BJ (cell line): ENCODE measurements at regions of chr2 and their contacts with region 1.

Region 1: GRCh38 chr2:42954227-42954962 is 162.0 kb upstream of the HAAO start:
- DNase-seq: no peak
- H3K4me3 ChIP-seq: no peak overlapping the region
- H3K27me3 ChIP-seq: no peaks in the 10 kb centered on the region
- CTCF ChIP-seq: 0 out of 2 replicates have a peak, but pooled peaks have one; percentile 10

Region 2: GRCh38 chr2:42624047-42624446 is 330.3 kb before region 1 on chr2:
- CTCF ChIA-PET with region 1: no interaction called
- POLR2A ChIA-PET with region 1: no interaction called
- DNase-seq: no peak
- H3K4me3 ChIP-seq: no peak overlapping the region
- H3K27me3 ChIP-seq: no peaks in the 10 kb centered on the region
- CTCF ChIP-seq: no peak

Region 3: DNA sequence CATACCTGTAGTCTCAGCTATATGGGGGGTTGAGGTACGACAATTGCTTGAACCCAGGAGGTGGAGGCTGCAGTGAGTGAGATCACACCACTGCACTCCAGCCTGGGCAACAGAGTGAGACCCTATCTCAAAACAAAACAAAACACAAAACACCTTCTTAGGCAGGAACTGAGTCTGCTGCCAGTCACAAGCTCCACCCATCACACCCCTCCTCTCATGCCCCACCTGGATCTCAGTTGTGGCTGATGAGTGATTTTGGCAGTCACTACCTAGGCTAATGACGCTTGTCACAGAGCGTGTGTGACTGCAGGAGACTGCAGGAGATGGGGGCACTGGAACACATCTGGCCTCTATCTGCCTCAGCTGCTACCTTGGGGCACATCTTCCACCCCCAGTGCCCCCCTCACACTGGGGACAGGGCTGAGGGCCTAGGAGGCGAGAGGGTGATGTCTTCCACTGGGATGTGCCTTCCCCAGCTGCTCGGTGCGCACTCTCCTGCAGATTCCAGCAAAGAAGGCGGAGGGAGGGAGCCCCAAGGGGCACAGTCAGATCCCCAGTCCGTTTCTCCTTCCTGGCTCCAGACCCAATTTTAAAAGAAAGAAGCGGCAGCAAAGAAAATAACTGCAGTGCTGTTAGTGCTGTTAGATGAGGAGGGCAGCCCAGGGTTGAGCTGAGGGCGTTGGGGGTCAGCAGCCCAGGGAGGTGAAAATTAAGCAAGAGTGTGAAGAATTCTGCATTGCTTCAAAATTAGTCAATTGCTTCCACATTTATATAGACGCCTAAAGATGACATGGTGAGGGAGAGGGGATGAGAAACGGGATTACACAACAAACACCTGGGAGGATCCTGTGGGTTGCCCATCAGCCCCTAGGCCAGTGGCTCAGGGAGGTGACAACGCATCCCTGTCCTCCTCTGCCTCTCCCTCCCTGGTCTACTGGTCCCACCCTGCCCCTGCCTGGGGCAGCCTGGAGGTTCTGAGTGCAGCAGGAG is 18.4 kb before region 1 on chr2:
- CTCF ChIA-PET with region 1: no interaction called
- POLR2A ChIA-PET with region 1: no interaction called
- DNase-seq: no peak
- H3K4me3 ChIP-seq: no peak overlapping the region
- H3K27me3 ChIP-seq: no peaks in the 10 kb centered on the region
- CTCF ChIP-seq: no peak

Region 4: GRCh38 chr2:42964439-42965083 is 10.2 kb after region 1 on chr2:
- CTCF ChIA-PET with region 1: interaction called, 3 read pairs
- POLR2A ChIA-PET with region 1: interaction called, 10 read pairs
- DNase-seq: peak; percentile 85
- H3K4me3 ChIP-seq: no peak overlapping the region
- H3K27me3 ChIP-seq: no peaks in the 10 kb centered on the region
- CTCF ChIP-seq: no peak

Region 5: GRCh38 chr2:42987112-42987922 is 32.9 kb after region 1 on chr2:
- CTCF ChIA-PET with region 1: no interaction called
- POLR2A ChIA-PET with region 1: no interaction called
- DNase-seq: peak; percentile 53
- H3K4me3 ChIP-seq: no peak overlapping the region
- H3K27me3 ChIP-seq: no peaks in the 10 kb centered on the region
- CTCF ChIP-seq: no peak